MCF 10A (cell line): ENCODE measurements at regions of chr1 and their contacts with region 1.

Region 1: DNA sequence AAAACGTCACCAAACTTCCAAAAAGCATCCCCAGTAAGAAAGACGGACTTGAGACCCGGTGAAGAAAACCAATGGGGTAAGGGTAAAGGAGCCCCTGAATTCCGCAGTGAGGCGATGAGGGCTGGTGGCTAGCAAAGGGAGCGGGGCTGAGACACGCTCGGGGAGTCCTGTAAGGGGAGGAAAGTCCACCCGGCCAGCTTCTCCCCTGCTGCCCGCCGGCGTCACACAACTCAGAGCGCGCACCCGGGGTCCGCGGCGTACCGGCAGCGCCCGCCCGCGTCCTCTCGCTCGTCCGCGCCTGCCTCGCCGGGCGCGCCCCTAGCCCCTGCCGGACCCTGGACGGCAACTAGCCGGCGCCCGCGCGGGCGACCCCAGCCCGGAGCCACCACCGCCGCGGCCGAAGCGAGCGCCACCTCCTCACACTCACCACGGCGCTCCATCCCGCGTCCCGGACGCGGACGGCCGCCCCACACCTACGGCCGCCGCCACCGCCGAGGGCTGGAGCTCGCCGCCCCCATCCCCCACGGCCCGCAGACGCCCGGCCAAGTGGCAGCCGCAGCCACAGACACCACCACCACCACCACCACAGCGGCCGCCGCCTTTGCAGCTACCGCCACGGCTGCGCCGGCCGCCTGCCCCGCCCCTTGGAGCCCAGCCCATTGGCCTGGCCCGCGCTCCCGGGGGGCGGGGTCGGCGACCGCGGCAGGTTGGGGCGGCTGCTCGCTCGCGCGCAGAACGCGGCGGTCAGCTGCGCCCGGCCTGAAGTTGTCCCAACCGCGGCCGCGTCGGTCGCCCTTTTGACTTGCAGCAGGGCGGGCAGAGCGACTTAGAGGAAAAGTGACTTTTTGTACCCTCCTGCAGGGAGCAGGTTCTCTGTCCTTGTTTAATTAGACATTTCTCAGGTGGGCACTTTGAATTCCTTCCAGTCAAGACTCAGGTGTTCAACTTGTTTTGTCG is 10.0 kb upstream of the ARHGAP29 start:
- DNase-seq: peak; percentile 72
- H3K4me3 Mint-ChIP-seq: peak overlapping the region; percentile 82
- H3K27ac Mint-ChIP-seq: peak overlapping the region; percentile 77
- H3K4me1 Mint-ChIP-seq: peaks cover 23% of the 10 kb centered on the region
- H3K27me3 Mint-ChIP-seq: no peaks in the 10 kb centered on the region
- CTCF ChIP-seq: no peak

Region 2: GRCh38 chr1:94228640-94229375 is 18.6 kb before region 1 on chr1:
- CTCF ChIA-PET with region 1: interaction called, 3 read pairs
- POLR2A ChIA-PET with region 1: interaction called, 69 read pairs
- intact Hi-C with region 1: no loop called
- DNase-seq: no peak
- H3K4me3 Mint-ChIP-seq: peak overlapping the region; percentile 47
- H3K27ac Mint-ChIP-seq: peak overlapping the region; percentile 49
- H3K4me1 Mint-ChIP-seq: peaks cover 48% of the 10 kb centered on the region
- H3K27me3 Mint-ChIP-seq: no peaks in the 10 kb centered on the region
- CTCF ChIP-seq: no peak

Region 3: GRCh38 chr1:94258873-94259331 is 11.5 kb after region 1 on chr1:
- CTCF ChIA-PET with region 1: interaction called, 5 read pairs
- POLR2A ChIA-PET with region 1: interaction called, 14 read pairs
- intact Hi-C with region 1: no loop called
- DNase-seq: peak; percentile 89
- H3K4me3 Mint-ChIP-seq: peak overlapping the region; percentile 50
- H3K27ac Mint-ChIP-seq: peak overlapping the region; percentile 99
- H3K4me1 Mint-ChIP-seq: peaks cover 46% of the 10 kb centered on the region
- H3K27me3 Mint-ChIP-seq: no peaks in the 10 kb centered on the region
- CTCF ChIP-seq: no peak

Region 4: DNA sequence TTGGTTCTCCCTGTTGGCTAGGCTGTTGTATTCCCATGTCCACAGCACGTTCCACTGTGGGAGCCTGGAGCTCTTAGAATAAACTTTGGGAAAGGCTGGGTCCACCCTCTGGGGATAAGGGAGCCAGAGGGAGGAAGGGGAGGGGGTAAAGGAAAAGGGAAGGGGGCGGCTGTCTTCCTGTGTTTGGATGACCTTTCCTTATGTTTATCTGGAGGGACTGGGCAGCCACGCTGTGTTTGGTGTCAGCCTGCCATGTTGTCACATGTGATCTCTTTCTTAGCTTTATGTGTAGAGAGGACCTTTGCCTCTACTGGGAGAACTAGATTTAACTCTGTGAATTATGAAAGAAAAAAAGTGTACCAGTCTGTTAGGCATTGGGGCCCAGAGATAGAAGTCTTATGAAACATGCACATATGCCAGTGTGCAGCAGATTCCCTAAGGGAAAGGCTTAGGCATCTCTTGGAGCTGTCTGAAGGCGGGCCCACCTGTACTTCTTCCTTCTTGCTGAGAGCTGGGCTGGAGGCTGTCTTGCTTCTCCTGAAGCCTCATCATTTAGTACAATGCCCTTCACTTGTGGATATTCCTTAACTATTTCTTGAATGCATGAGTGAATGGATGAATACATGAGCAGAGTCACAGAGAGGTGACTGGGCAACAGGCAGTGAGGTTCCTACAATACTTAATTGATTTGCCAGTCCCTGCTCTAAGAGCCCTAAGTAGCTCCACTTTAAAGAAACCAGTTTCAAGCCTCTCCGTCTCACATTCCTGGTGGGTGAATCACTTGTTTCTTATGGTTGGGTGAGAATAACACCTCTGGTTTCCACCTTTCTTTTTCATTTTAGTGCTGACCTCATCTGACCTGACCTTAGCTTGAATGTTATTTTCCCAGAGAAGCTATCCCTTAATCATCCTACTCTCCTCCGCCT is 52.5 kb after region 1 on chr1:
- CTCF ChIA-PET with region 1: interaction called, 3 read pairs
- POLR2A ChIA-PET with region 1: interaction called, 21 read pairs
- intact Hi-C with region 1: no loop called
- DNase-seq: peak; percentile 91
- H3K4me3 Mint-ChIP-seq: no peak overlapping the region
- H3K27ac Mint-ChIP-seq: peak overlapping the region; percentile 92
- H3K4me1 Mint-ChIP-seq: peaks cover 30% of the 10 kb centered on the region
- H3K27me3 Mint-ChIP-seq: no peaks in the 10 kb centered on the region
- CTCF ChIP-seq: no peak

Region 5: GRCh38 chr1:94310570-94311270 is 63.3 kb after region 1 on chr1:
- CTCF ChIA-PET with region 1: no interaction called
- POLR2A ChIA-PET with region 1: no interaction called
- intact Hi-C with region 1: no loop called
- DNase-seq: no peak
- H3K4me3 Mint-ChIP-seq: no peak overlapping the region
- H3K27ac Mint-ChIP-seq: no peak overlapping the region
- H3K4me1 Mint-ChIP-seq: no peaks in the 10 kb centered on the region
- H3K27me3 Mint-ChIP-seq: no peaks in the 10 kb centered on the region
- CTCF ChIP-seq: no peak